T-cell (primary cell): ENCODE measurements at regions of chr2 and their contacts with region 1.

Region 1: GRCh38 chr2:46062637-46063412 is 234.4 kb upstream of the EPAS1 start:
- DNase-seq: peak; percentile 14 to 75 (median 53)
- ATAC-seq: peak in 2 of 4 experiments; percentile 43 to 53
- H3K4me3 ChIP-seq: no peak overlapping the region
- H3K4me3 Mint-ChIP-seq: no peak overlapping the region
- H3K27ac ChIP-seq: no peak overlapping the region
- H3K27ac Mint-ChIP-seq: no peak overlapping the region
- H3K4me1 ChIP-seq: no peaks in the 10 kb centered on the region
- H3K4me1 Mint-ChIP-seq: peaks cover 0 to 14% (median 5%) of the 10 kb centered on the region in 3 donors
- H3K27me3 ChIP-seq: no peaks in the 10 kb centered on the region
- H3K27me3 Mint-ChIP-seq: peaks cover 4 to 5% of the 10 kb centered on the region in 2 donors

Region 2: GRCh38 chr2:45974056-45974455 is 88.8 kb before region 1 on chr2:
- CTCF ChIA-PET with region 1: no interaction called
- POLR2A ChIA-PET with region 1: no interaction called
- DNase-seq: no peak
- ATAC-seq: no peak
- H3K4me3 ChIP-seq: no peak overlapping the region
- H3K4me3 Mint-ChIP-seq: no peak overlapping the region
- H3K27ac ChIP-seq: no peak overlapping the region
- H3K27ac Mint-ChIP-seq: no peak overlapping the region
- H3K4me1 ChIP-seq: no peaks in the 10 kb centered on the region
- H3K4me1 Mint-ChIP-seq: no peaks in the 10 kb centered on the region
- H3K27me3 ChIP-seq: no peaks in the 10 kb centered on the region
- H3K27me3 Mint-ChIP-seq: no peaks in the 10 kb centered on the region

Region 3: GRCh38 chr2:46097714-46098480 is 35.1 kb after region 1 on chr2:
- CTCF ChIA-PET with region 1: interaction called in 1 of 2 experiments, 10 read pairs
- POLR2A ChIA-PET with region 1: no interaction called
- DNase-seq: no peak
- ATAC-seq: no peak
- H3K4me3 ChIP-seq: no peak overlapping the region
- H3K4me3 Mint-ChIP-seq: no peak overlapping the region
- H3K27ac ChIP-seq: no peak overlapping the region
- H3K27ac Mint-ChIP-seq: no peak overlapping the region
- H3K4me1 ChIP-seq: no peaks in the 10 kb centered on the region
- H3K4me1 Mint-ChIP-seq: no peaks in the 10 kb centered on the region
- H3K27me3 ChIP-seq: no peaks in the 10 kb centered on the region
- H3K27me3 Mint-ChIP-seq: no peaks in the 10 kb centered on the region

Region 4: DNA sequence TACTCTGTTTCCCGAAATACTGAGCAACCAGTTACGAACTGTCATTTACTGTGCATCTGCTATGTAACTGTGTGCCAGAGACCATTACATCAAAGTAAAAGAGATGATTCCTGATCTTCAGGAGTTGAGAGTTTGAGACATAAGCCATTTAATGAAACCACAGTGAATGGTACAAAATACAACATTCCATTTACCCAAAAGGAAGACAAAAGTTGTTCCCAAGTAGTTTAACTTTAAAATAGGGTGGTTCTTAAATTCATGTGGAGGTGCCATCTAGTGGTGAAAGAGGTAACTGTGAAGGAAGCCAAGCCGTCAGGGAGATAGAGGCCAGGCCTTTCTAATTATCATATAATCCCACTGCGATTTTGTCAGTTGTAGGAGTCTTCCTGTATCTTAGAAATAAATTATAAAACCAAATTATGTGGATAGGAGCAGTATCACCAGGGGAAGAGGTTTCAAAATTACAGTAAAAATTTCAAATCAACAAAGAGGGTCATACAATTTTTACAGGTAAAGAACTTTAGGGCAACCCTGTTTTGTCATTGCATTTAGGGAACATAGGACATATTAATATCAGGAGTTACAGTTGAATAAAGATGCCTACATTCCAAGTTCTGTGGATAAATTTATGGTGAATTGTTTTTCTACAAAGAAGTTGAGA is 302.1 kb after region 1 on chr2:
- CTCF ChIA-PET with region 1: interaction called, 8 to 16 read pairs
- POLR2A ChIA-PET with region 1: no interaction called
- DNase-seq: peak in 16 of 35 experiments; percentile 7 to 75 (median 20)
- ATAC-seq: peak; percentile 45 to 63 (median 52)
- H3K4me3 ChIP-seq: no peak overlapping the region
- H3K4me3 Mint-ChIP-seq: no peak overlapping the region
- H3K27ac ChIP-seq: no peak overlapping the region
- H3K27ac Mint-ChIP-seq: no peak overlapping the region
- H3K4me1 ChIP-seq: peaks cover 6 to 19% of the 10 kb centered on the region in 2 experiments
- H3K4me1 Mint-ChIP-seq: peaks cover 31 to 43% (median 38%) of the 10 kb centered on the region in 3 donors
- H3K27me3 ChIP-seq: no peaks in the 10 kb centered on the region
- H3K27me3 Mint-ChIP-seq: no peaks in the 10 kb centered on the region

Region 5: GRCh38 chr2:46378616-46379015 is 315.8 kb after region 1 on chr2:
- CTCF ChIA-PET with region 1: interaction called in 1 of 2 experiments, 13 read pairs
- POLR2A ChIA-PET with region 1: no interaction called
- DNase-seq: no peak
- ATAC-seq: no peak
- H3K4me3 ChIP-seq: no peak overlapping the region
- H3K4me3 Mint-ChIP-seq: no peak overlapping the region
- H3K27ac ChIP-seq: no peak overlapping the region
- H3K27ac Mint-ChIP-seq: no peak overlapping the region
- H3K4me1 ChIP-seq: no peaks in the 10 kb centered on the region
- H3K4me1 Mint-ChIP-seq: no peaks in the 10 kb centered on the region
- H3K27me3 ChIP-seq: peaks cover 0 to 2% of the 10 kb centered on the region in 2 experiments
- H3K27me3 Mint-ChIP-seq: no peaks in the 10 kb centered on the region

Region 6: DNA sequence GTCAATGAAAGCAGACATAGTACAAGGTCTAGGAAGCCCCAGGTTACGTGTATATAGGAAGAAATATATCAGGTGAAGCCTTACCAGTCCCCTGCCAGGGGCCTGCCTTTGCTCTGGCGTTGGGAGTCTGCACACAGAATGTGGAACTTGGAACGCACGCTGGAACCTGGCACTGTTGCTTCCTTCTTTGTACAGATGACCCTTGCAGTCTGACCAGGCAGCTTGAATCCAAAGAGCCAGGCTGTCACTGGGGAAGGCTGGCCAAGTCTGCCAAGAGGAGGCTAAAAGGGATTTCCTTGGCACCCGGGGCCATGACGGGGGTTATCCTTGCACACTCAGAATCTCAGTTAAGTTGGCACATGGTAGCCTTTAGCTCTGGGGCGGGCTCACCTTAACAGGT is 456.0 kb after region 1 on chr2:
- CTCF ChIA-PET with region 1: no interaction called
- POLR2A ChIA-PET with region 1: no interaction called
- DNase-seq: no peak
- ATAC-seq: no peak
- H3K4me3 ChIP-seq: no peak overlapping the region
- H3K4me3 Mint-ChIP-seq: no peak overlapping the region
- H3K27ac ChIP-seq: no peak overlapping the region
- H3K27ac Mint-ChIP-seq: no peak overlapping the region
- H3K4me1 ChIP-seq: no peaks in the 10 kb centered on the region
- H3K4me1 Mint-ChIP-seq: peaks cover 6 to 8% (median 7%) of the 10 kb centered on the region in 3 donors
- H3K27me3 ChIP-seq: no peaks in the 10 kb centered on the region
- H3K27me3 Mint-ChIP-seq: no peaks in the 10 kb centered on the region